Activated B cell treated with CpG ODN at 0.5 μM for 24 hours (primary cell): ENCODE measurements at regions of chr19 and their contacts with region 1.

Region 1: DNA sequence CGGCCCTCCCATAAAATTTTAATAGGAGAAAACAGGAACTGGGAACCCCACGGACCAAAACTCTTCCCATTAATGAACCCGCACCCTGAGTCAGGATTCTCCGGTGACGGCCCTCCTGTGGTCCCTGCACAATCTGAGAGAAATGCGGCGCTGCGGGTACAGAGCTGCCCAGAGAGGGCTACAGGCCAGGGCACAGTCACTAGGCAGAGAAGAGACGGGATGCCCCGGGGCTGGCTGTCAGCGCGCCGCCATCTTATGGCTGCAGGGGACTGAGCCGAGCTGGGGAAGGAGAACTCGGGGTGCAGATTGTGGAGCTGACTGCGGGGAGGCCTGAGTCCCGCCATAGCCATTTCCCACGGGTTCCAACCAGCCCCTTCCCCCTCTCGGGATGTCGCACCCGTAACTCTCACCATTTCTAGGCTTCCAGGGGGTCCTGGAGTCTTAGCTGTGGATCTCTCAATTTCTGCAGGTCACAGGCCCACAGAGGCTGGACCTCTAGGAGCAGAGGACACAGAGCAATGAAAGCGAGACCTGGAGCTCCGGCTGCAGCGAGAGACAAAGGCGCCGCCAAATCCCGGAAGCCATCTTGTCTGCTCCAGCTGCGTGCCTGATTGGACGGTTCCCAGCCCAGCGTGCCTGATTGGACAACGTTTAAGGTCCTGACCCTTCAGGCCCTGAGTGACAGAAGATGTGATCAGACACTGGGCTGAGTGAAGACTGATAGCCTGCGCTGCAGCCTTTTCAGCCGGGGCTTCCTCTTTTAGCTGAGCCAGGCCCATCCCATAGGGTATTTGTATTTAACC is at the start of gene ZNF675:
- DNase-seq: peak; percentile 75
- ATAC-seq: peak; percentile 97
- H3K4me3 Mint-ChIP-seq: peak within 1 kb of the TSS; percentile 99
- H3K27ac Mint-ChIP-seq: peak within 1 kb of the TSS; percentile 98
- H3K4me1 Mint-ChIP-seq: peaks cover 49% of the 10 kb centered on the region
- H3K27me3 Mint-ChIP-seq: no peaks in the 10 kb centered on the region
- CTCF ChIP-seq: no peak
- total RNA-seq, gene ZNF675: 27.9 and 34.2 TPM in 2 replicates

Region 2: GRCh38 chr19:22052644-22053013 is 1634.2 kb before region 1 on chr19:
- CTCF ChIA-PET with region 1: no interaction called
- POLR2A ChIA-PET with region 1: interaction called, 3 read pairs
- intact Hi-C with region 1: loop called (anchors 10 kb)
- DNase-seq: no peak
- ATAC-seq: peak; percentile 43
- H3K4me3 Mint-ChIP-seq: peak overlapping the region; percentile 99
- H3K27ac Mint-ChIP-seq: peak overlapping the region; percentile 81
- H3K4me1 Mint-ChIP-seq: peaks cover 8% of the 10 kb centered on the region
- H3K27me3 Mint-ChIP-seq: no peaks in the 10 kb centered on the region
- CTCF ChIP-seq: no peak

Region 3: GRCh38 chr19:23249911-23250649 is 436.7 kb before region 1 on chr19 and contains the start of gene ZNF724:
- CTCF ChIA-PET with region 1: no interaction called
- POLR2A ChIA-PET with region 1: no interaction called
- intact Hi-C with region 1: loop called (anchors 5 kb)
- DNase-seq: peak; percentile 77
- ATAC-seq: peak; percentile 100
- H3K4me3 Mint-ChIP-seq: peak within 1 kb of the TSS; percentile 98
- H3K27ac Mint-ChIP-seq: peak within 1 kb of the TSS; percentile 88
- H3K4me1 Mint-ChIP-seq: peaks cover 10% of the 10 kb centered on the region
- H3K27me3 Mint-ChIP-seq: no peaks in the 10 kb centered on the region
- CTCF ChIP-seq: no peak
- total RNA-seq, gene ZNF724: 4.5 and 8.0 TPM in 2 replicates

Region 4: GRCh38 chr19:23673132-23673531 is 13.7 kb before region 1 on chr19:
- CTCF ChIA-PET with region 1: no interaction called
- POLR2A ChIA-PET with region 1: interaction called, 3 read pairs
- intact Hi-C with region 1: loop called (anchors 2 kb)
- DNase-seq: no peak
- ATAC-seq: no peak
- H3K4me3 Mint-ChIP-seq: no peak overlapping the region
- H3K27ac Mint-ChIP-seq: no peak overlapping the region
- H3K4me1 Mint-ChIP-seq: peaks cover 43% of the 10 kb centered on the region
- H3K27me3 Mint-ChIP-seq: no peaks in the 10 kb centered on the region
- CTCF ChIP-seq: no peak

Region 5: DNA sequence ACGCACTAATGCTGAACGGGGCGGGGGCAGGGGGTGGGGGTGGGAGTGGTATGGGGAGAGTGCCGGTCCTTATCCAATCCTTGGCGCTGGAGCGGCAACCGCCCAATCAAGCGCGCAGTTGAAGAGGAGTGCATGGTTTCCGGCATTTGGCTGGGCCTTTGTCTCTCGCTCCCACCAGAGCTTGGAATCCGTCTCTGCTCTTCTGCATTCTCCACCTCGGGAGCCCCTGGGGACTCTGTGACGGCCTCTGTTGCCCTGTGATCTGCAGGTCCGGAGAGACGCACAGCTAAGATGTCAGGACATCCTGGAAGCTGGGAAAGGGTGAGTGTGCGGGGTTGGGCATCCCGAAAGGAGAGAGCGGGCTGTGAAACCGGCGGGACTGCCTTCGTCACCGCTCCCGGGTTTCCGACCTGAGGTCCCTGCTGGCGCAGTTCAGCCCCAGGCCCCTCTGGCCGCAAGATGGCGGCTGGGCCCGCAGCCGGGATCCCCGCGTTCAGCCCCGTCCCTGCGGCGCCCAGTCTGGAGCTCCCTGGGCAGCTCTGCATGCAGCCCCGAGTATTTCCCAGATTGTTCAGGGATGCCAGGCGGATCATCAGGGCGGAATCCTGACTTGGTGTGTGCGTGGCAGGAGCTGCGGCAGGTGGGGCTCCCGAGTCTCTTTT is 346.6 kb after region 1 on chr19:
- CTCF ChIA-PET with region 1: interaction called, 3 read pairs
- POLR2A ChIA-PET with region 1: interaction called, 9 read pairs
- intact Hi-C with region 1: loop called (anchors 2 kb)
- DNase-seq: peak; percentile 63
- ATAC-seq: peak; percentile 97
- H3K4me3 Mint-ChIP-seq: peak overlapping the region; percentile 100
- H3K27ac Mint-ChIP-seq: peak overlapping the region; percentile 97
- H3K4me1 Mint-ChIP-seq: peaks cover 42% of the 10 kb centered on the region
- H3K27me3 Mint-ChIP-seq: no peaks in the 10 kb centered on the region
- CTCF ChIP-seq: no peak